Panc1 (cell line): ENCODE measurements at regions of chr5 and their contacts with region 1.

Region 1: GRCh38 chr5:14101922-14102321 is 41.2 kb upstream of the TRIO start:
- DNase-seq: no peak
- ATAC-seq: no peak
- H3K4me3 ChIP-seq: no peak overlapping the region
- H3K27ac ChIP-seq: peak overlapping the region; percentile 100
- H3K4me1 ChIP-seq: peaks cover 33% of the 10 kb centered on the region
- H3K27me3 ChIP-seq: no peaks in the 10 kb centered on the region
- CTCF ChIP-seq: no peak

Region 2: DNA sequence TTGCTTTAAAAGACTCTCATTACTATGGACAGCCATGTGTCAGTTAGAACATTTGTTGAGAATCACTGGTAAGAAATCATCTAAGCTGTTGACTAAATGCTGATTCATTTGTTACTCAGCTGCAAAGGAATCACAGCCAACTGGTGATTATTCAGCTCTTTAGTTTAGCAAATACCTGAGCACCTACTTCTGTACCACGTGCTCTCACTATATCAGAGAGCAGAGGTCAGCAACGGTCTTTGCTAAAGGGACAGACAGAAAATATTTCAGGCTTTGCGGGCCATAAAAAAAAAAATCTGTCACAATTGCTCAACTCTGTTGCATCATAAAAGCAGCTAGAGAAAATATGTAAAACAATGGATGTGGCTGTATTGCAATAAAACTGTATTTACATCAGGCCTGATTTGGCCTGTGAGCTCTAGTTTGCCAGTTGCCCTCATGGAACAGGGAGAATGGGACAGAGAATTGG is 535.0 kb before region 1 on chr5:
- CTCF ChIA-PET with region 1: no interaction called
- POLR2A ChIA-PET with region 1: no interaction called
- in situ Hi-C with region 1: no loop called
- intact Hi-C with region 1: no loop called
- DNase-seq: peak; percentile 82
- ATAC-seq: peak; percentile 78
- H3K4me3 ChIP-seq: no peak overlapping the region
- H3K27ac ChIP-seq: no peak overlapping the region; the same call in 1 of the 2 replicates
- H3K4me1 ChIP-seq: no peaks in the 10 kb centered on the region
- H3K27me3 ChIP-seq: no peaks in the 10 kb centered on the region
- CTCF ChIP-seq: no peak

Region 3: DNA sequence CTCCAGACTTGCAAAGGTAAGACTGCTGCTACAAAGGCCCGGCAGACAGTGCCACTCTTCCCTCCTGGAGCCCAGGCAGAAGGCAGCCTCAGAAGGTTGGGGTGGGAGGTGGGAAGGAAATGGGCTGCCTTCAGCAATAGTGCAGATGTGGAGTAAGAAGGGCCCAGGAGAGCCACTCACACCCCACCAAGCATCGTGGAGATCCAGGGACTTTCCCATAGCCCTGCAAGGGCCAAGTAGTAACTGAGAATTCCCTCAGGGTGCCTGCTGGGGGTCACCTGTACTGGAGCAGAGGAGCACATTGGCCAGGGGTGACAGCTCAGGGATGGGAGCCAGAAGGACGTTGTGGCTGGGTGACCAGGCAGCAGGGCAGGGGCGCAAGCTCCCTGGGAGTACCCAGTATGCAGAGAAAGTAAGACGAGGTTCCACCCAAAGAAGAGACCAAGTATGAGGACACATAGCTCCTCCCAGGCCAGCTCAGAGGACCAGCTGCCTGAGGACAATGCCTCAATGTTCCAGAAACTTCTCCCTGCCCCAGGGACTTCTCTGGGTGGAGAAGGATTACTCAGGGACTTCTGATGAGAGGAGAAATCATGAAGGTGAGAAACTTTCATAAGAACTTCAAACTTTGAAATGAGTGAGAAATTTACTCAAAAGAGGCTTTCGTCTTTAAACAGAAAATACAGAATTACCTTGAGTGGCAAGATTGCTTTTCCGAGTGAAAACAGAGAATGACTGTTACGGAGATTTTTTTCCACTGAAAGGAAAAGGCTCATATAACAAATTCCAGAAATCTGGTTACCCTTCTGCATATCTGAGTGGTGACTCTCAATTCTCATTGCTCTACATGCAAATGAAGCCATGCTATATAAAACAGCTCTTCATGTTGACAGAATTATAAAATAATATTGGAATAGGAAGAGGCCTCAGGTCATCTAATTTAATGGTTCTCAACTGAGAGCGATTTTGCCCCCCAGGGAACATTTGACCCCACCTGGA is 46.7 kb before region 1 on chr5:
- CTCF ChIA-PET with region 1: no interaction called
- POLR2A ChIA-PET with region 1: no interaction called
- in situ Hi-C with region 1: no loop called
- intact Hi-C with region 1: loop called (anchors 5 kb)
- DNase-seq: no peak
- ATAC-seq: peak; percentile 59
- H3K4me3 ChIP-seq: no peak overlapping the region
- H3K27ac ChIP-seq: peak overlapping the region; percentile 77
- H3K4me1 ChIP-seq: peaks cover 18% of the 10 kb centered on the region
- H3K27me3 ChIP-seq: no peaks in the 10 kb centered on the region
- CTCF ChIP-seq: no peak